Brain microvascular endothelial cell (primary cell): ENCODE measurements at regions of chr4 and their contacts with region 1.

Region 1: DNA sequence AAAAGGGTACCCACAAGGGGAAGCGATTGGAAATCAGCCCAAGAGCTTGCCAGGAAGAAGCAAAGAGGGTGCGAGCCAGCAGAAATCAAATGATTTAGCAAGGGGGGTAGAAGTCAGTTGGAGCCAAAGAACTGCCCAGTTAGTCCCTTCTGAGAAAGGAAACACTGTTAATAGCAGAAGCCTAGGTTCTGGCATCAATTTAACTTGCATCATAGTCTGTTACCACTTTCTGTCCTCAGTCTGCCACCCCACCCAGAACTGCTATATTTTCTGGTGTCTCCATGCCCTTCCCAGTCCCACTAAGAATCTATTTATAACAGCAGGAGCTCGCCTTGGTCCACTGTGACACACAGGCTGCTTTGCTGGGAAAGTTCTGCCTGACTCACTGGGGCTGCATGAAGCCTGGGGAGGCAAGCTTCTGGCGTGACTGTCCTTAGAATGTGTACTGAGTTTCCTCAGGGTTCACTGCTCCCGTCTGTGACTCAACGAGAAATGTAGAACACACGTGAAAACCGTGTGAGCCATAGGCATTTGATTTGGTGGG is 157.8 kb upstream of the TTC29 start:
- DNase-seq: peak; percentile 96
- H3K4me3 ChIP-seq: no peak overlapping the region
- H3K27ac ChIP-seq: peak overlapping the region; percentile 99
- H3K27me3 ChIP-seq: no peaks in the 10 kb centered on the region
- CTCF ChIP-seq: no peak

Region 2: GRCh38 chr4:147480891-147481576 is 377.6 kb after region 1 on chr4 and contains the start of gene EDNRA:
- in situ Hi-C with region 1: loop called (anchors 10 kb)
- DNase-seq: peak; percentile 74
- H3K4me3 ChIP-seq: peak within 1 kb of the TSS; percentile 77
- H3K27ac ChIP-seq: peak within 1 kb of the TSS; percentile 82
- H3K27me3 ChIP-seq: no peaks in the 10 kb centered on the region
- CTCF ChIP-seq: no peak

Region 3: GRCh38 chr4:147590249-147590920 is 486.9 kb after region 1 on chr4:
- in situ Hi-C with region 1: loop called (anchors 25 kb)
- DNase-seq: peak; percentile 81
- H3K4me3 ChIP-seq: no peak overlapping the region
- H3K27ac ChIP-seq: peak overlapping the region; percentile 87
- H3K27me3 ChIP-seq: no peaks in the 10 kb centered on the region
- CTCF ChIP-seq: peak; percentile 76